GM13976 (cell line): ENCODE measurements at regions of chr3 and their contacts with region 1.

Region 1: GRCh38 chr3:153768561-153769469 is 352.4 kb upstream of the ARHGEF26 start:
- DNase-seq: peak; percentile 52
- CTCF ChIP-seq: peak; percentile 73

Region 2: GRCh38 chr3:153161138-153161713 is 607.6 kb before region 1 on chr3:
- in situ Hi-C with region 1: loop called (anchors 25 kb)
- DNase-seq: peak; percentile 94
- CTCF ChIP-seq: no peak

Region 3: DNA sequence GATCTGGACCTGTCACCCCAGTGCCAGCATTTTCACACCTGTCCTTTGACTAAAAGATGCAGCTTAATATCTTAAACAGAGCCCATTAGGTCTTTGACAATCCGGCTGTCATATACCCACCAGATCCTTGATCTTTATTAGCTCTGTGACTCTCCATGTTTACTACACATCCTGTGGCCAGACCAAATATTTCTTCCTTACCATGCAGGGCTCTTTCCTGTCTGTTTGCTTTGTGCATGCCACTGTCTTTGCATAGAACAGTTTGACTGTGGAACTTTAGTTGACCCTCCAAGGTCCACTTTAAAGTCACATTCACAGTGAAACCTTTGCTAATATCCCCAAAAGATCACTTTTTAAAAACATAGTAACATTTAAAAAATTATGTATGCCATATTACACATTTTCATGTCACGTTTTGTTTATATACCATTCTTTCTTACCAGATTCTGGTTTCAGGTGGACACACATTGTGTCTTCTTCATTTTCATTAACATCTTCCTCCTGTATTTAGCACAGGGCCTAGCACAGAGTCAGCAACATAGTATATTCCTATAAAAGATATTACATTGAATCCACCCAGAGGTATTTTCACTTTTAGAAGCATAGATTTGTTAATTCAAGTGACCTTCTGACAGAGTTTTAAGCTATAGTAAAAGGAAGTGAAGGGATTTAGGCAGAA is 511.0 kb before region 1 on chr3:
- in situ Hi-C with region 1: no loop called
- DNase-seq: no peak
- CTCF ChIP-seq: no peak

Region 4: DNA sequence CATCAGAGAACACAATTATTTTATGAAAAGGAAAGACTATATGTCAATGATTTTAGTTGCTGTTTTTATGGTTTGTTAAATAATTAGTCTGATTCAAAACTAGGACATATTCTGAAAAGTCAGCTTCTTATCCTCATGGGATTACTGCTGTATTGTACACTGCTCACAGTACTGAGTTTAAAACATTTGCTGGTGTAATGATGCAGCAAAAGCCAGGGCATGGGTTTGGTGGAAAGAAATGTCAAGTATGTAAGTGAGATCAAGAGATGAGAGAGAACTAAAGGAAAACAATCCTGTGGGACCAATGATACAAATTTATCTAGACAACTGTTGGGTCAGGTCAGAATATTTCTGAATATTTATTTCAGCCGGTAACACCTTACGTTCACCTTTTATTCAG is 142.3 kb after region 1 on chr3:
- in situ Hi-C with region 1: no loop called
- DNase-seq: no peak
- CTCF ChIP-seq: no peak

Region 5: DNA sequence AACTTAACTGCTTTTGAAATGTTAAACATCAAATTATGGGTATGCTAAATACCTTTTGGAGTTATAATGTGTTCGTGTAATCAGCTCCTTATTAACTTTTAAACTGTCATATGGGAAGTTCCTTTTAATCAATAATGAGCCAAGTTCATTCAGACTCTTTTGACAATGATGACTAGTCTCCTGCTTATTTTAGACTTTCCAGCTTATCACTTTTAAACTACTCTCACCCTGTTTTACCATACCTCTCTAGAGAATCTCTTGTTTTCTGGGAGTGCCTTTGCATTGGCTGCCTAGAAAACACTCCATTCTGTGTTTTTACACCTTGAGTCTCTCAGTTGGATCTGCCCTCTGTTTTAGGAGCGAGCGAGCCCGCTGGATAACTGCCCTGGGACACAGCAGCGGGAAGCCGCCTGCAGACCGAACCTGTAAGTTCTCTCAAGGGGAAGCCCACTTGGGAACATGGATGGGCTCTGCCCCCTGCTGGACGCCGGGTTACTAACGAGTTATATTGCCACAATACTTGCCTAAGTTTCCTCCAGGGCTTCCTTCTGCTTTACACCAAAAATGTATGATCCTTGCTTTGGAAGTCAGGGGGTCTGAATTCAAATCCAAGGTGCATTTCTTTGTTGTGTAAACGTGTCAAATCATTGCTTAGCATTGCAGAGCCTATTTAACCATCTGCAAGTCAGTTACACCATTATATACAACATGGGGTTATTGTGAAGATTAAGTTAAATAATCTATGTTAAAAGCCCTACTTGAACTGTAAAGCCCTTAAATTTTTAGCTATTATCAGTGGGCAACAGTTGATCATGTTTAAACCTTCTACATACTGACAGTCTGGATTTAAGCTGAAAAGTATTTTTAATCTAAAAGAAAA is 484.2 kb after region 1 on chr3:
- in situ Hi-C with region 1: no loop called
- DNase-seq: peak; percentile 66
- CTCF ChIP-seq: peak; percentile 74